ENCODE measurements at regions of chr17 and their contacts with region 1.

Region 1: GRCh38 chr17:45394913-45395568 is 37.6 kb downstream of the ARHGAP27 start:
- DNase-seq: peak; percentile 95
- H3K4me3 ChIP-seq: no peak overlapping the region; a peak in 1 of 4 replicates
- H3K27ac ChIP-seq: no peak overlapping the region
- H3K4me1 ChIP-seq: peaks cover 0 to 8% of the 10 kb centered on the region in 2 experiments; a peak in 1 of 4 replicates
- H3K27me3 ChIP-seq: no peaks in the 10 kb centered on the region
- CTCF ChIP-seq: peak; percentile 76
- EP300 ChIP-seq: no peak
- RAD21 ChIP-seq: peak; percentile 83

Region 2: GRCh38 chr17:45228763-45229539 is 166.1 kb before region 1 on chr17:
- CTCF ChIA-PET with region 1: interaction called, 260 read pairs
- POLR2A ChIA-PET with region 1: no interaction called
- DNase-seq: no peak
- H3K4me3 ChIP-seq: no peak overlapping the region
- H3K27ac ChIP-seq: no peak overlapping the region
- H3K4me1 ChIP-seq: peaks cover 4 to 23% of the 10 kb centered on the region in 2 experiments; a peak in 2 of 4 replicates
- H3K27me3 ChIP-seq: no peaks in the 10 kb centered on the region
- CTCF ChIP-seq: no peak
- EP300 ChIP-seq: no peak
- RAD21 ChIP-seq: no peak

Region 3: GRCh38 chr17:45277216-45277849 is 117.7 kb before region 1 on chr17:
- CTCF ChIA-PET with region 1: interaction called, 27 read pairs
- POLR2A ChIA-PET with region 1: no interaction called
- DNase-seq: peak; percentile 67
- H3K4me3 ChIP-seq: no peak overlapping the region; a peak in 1 of 4 replicates
- H3K27ac ChIP-seq: peak overlapping the region in 1 of 2 experiments; percentile 63; a peak in 2 of 4 replicates
- H3K4me1 ChIP-seq: peaks cover 6% of the 10 kb centered on the region in 2 experiments; a peak in 2 of 4 replicates
- H3K27me3 ChIP-seq: no peaks in the 10 kb centered on the region
- CTCF ChIP-seq: peak; percentile 71
- EP300 ChIP-seq: no peak
- RAD21 ChIP-seq: peak; percentile 78

Region 4: DNA sequence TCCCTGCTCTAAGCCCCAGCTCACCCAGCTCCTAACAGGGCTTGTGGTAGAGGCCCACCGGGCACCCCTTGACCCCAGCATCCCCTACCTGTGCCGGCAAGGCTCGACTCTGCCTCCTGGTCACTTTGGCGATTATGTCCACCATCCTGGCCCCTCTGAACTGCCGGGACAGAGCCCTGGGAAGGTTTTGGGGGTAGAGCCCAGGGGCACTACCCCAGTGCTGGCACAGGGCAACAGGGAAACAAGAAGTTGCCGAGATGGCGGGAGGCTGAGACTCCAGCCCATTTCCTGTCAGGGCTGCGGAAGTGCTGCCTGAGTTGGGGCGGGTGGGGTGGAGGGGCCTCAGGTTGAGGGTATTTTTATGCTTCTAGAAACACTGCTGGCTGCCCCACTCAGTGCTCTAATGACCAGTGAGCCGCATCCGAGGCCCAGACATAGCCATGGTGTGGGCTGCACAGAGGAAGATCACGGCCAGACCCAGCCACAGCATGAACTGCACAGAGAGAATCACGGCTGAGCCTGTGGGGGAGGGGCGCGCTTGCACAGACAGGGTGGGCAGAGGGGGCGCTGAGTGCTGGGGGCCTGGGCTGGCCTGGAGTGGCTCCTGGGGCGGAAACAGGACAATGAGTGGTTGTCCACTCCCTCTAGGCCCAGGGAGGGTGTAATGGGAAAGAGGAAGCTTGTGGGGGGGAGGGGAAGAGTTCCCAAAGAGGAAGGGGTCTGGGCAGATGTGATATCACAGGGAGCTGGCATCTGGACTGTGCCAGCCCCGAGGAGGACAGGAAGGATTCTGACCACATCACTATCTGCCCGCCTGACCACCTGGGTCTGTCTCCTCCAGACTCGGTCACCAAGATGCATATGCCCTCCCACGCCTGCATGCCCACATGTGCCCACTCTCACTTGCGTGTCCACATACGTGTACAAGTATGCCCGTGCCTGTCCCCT is 15.4 kb after region 1 on chr17:
- CTCF ChIA-PET with region 1: interaction called, 16 read pairs
- POLR2A ChIA-PET with region 1: no interaction called
- DNase-seq: peak; percentile 59
- H3K4me3 ChIP-seq: no peak overlapping the region
- H3K27ac ChIP-seq: no peak overlapping the region
- H3K4me1 ChIP-seq: peaks cover 0 to 25% of the 10 kb centered on the region in 2 experiments; a peak in 1 of 4 replicates
- H3K27me3 ChIP-seq: no peaks in the 10 kb centered on the region
- CTCF ChIP-seq: no peak
- EP300 ChIP-seq: no peak
- RAD21 ChIP-seq: no peak

Region 5: DNA sequence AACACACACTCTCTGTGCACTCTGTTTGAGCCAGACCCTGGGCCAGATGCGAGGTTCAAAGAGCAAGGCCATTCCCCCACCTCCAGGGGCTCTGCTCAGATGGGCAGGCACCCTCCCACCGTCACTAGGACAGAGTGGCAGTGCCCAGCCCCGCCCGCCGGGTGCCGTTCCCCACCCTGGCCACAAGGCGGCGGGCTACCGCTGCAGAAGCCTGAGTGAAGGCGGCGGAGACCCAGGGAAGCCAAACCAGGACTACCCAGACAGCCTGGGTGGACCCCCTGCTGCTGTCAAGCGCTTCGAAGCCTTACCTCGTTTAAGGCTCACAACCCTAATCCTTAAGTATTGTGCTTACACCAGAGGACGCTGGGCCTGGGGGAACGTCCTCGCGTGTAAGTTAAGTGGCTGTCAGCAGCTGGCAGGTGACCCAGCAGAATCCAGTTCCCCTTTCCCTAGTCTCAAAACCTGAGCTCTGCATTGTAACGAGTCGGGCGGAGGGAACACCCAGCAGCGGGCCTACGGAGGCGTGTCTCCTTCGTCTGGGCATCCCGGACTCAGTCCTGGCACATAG is 33.1 kb after region 1 on chr17:
- CTCF ChIA-PET with region 1: interaction called, 36 read pairs
- POLR2A ChIA-PET with region 1: no interaction called
- DNase-seq: peak; percentile 94
- H3K4me3 ChIP-seq: no peak overlapping the region; a peak in 1 of 4 replicates
- H3K27ac ChIP-seq: no peak overlapping the region
- H3K4me1 ChIP-seq: peaks cover 0 to 16% of the 10 kb centered on the region in 2 experiments; a peak in 1 of 4 replicates
- H3K27me3 ChIP-seq: no peaks in the 10 kb centered on the region
- CTCF ChIP-seq: peak; percentile 88
- EP300 ChIP-seq: no peak
- RAD21 ChIP-seq: peak; percentile 84

Region 6: DNA sequence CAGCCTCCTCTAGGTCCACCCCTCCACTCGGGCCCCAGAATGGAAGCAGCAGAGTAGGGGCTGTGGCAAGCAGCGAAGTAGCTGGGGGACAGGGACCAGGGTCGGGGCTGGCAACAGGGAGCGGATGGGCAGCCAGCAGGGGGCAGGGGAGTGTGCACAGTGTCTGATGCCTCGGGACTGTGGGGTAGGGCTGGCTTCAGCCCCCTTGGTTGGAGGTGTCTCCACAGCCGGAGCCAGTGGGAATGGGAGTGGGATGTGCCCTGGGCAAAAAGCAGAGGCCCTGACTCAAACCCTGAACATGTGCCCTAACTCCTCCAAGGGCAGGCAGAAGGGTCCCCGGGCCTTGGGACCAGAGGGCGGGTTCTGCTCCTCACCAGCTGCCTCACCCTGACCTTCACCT is 56.1 kb after region 1 on chr17:
- CTCF ChIA-PET with region 1: no interaction called
- POLR2A ChIA-PET with region 1: no interaction called
- DNase-seq: peak; percentile 24
- H3K4me3 ChIP-seq: no peak overlapping the region
- H3K27ac ChIP-seq: no peak overlapping the region
- H3K4me1 ChIP-seq: no peaks in the 10 kb centered on the region
- H3K27me3 ChIP-seq: no peaks in the 10 kb centered on the region
- CTCF ChIP-seq: peak; percentile 21; the same call in 1 of the 2 replicates
- EP300 ChIP-seq: no peak
- RAD21 ChIP-seq: no peak